Posterior vena cava (tissue), 2 donors: ENCODE measurements at regions of chr1 and their contacts with region 1.

Region 1: DNA sequence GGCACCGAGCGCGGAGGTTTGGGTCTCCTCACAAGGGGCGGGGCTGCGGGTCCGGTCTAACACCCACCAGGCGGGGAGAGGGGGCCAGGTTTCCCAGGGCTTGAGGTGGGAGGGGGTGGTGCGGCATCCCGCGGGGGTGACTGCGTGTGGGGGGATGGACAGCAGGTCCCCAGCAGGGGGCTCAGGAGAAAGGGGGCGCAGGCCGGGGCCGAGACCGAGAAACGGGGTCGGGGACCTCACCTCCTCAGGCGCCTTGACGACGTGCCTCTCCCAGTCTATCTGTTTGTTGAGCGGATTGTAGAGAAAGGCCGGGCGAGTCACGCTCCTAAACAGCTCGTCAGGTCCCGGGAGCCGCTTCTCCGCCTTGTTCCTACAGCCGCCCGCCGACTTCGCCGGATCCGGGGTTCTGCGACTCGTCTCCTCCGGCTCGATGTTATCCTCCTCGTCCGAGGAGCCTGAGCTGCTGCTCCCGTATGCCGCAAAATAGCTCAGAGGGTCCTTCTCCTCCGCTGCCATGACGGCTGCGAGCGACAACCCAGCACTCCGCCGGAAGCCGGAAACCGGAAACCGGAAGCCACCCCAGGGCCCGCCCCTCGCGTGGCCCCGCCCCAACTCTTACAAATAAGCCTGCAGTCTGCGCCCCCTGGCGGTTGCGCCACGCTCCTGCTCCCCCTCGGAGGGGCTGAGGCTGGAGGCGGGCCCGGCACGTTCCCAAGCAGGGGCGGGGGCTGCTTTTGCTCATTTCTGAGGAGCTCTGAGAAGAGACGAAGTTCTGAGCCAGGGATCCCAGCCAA is at the start of gene C1orf52:
- DNase-seq: peak; percentile 98
- total RNA-seq, gene C1orf52: 17.5 to 22.9 TPM

Region 2: DNA sequence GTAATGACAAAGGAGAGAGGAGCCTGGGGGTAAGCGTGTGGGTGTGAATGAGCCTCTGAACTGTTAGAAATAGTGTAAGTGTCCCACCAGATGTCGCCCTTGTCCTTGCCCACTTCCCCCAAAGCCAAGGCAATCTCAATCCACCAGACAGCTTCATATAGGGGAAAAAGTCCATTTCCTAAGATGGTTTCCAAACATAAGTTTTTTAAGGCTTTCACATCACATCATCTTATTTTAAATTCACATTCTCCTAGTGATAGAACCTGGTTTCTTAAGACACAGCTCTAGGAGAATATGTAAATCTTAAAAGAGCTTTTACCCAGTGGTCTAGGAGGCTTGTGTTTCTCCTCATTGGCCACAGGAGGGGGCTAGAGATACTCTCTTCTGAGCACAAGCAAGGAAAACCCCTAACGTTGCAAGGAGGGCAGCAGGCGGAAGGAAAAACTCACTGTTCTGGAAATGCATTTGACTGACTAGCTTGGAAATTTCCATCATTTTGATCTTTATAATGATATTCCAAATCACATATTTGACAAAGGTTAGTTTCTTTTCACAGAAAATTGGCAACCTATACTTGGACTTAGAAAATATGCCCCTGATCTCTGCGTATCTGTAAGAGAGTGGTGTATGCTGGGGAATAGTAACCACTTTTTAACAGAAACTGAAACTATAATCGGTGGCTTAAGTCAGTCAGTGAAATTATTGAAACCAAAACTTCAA is 314.4 kb before region 1 on chr1:
- intact Hi-C with region 1: loop called in 1 of 2 experiments (anchors 10 kb)
- DNase-seq: no peak

Region 3: GRCh38 chr1:85109475-85109874 is 149.8 kb before region 1 on chr1:
- intact Hi-C with region 1: loop called in 1 of 2 experiments (anchors 5 kb)
- DNase-seq: peak; percentile 87

Region 4: DNA sequence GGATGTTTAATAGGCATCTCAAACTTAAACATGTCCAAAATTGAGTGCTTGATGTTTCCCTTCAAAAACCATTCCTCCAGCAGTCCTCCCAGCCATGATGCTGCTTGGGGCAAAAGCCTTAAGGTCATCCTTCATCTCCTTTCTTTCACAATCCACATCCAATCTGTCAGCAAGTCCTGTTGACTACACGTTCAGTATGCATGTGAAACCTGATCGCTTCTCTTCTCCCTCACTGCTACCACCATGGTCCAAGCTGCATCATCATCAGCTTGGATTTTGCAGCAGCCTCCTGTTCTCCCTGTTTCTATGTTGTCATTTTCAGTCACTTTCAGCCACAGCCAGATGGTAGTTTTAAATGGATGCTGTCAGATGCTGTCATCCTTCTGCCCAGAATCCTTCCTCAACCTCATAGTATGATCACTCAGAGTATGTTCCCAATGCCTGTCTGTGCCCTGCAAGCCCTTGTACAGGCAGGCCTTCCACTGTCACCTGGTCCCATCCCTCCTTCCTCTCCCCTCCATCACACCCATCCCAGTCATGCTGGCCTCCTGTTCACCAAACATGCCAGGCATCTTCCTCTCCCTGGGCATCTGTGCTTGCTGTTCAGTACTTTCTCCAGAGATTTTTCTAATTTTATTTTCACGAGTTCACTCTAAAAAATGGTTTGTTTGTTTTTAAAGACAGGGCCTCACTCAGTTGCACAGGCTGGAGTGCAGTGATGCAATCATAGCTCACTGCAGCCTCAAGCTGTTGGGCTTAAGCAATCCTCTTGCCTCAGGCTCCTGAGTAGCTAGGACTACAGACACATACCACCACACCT is 124.5 kb before region 1 on chr1:
- intact Hi-C with region 1: loop called in 1 of 2 experiments (anchors 10 kb)
- DNase-seq: no peak

Region 5: DNA sequence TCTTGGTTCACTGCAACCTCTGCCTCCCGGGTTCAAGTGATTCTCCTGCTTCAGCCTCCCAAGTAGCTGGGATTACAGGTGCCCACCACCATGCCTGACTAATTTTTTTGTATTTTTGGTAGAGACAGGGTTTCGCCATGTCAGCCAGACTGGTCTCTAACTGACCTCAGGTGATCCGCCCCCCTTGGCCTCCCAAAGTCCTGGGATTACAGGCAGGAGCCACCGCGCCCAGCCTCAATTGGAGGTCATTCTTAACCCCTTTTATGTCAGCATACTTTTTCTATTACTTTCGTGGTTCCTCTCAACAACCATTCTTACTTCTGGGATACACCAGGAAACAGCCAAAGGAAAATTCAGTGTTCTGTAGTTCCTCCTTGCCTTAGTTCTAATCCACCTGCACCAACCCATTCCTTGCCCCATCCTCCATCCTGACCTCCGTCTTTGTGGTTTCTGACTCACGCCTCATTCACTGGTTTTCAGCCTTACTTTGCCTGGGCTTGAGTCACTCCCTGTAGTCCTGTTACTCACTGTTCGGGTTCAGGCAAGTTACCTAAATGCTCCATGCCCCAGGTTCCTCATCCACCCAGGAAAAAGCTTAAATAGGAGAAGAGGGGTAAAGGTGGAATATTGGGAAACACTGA is 30.0 kb after region 1 on chr1:
- intact Hi-C with region 1: no loop called
- DNase-seq: no peak

Region 6: GRCh38 chr1:85307987-85308832 is 48.9 kb after region 1 on chr1:
- intact Hi-C with region 1: no loop called
- DNase-seq: peak; percentile 96